CD8-positive, alpha-beta memory T cell (primary cell): ENCODE measurements at regions of chr2 and their contacts with region 1.

Region 1: DNA sequence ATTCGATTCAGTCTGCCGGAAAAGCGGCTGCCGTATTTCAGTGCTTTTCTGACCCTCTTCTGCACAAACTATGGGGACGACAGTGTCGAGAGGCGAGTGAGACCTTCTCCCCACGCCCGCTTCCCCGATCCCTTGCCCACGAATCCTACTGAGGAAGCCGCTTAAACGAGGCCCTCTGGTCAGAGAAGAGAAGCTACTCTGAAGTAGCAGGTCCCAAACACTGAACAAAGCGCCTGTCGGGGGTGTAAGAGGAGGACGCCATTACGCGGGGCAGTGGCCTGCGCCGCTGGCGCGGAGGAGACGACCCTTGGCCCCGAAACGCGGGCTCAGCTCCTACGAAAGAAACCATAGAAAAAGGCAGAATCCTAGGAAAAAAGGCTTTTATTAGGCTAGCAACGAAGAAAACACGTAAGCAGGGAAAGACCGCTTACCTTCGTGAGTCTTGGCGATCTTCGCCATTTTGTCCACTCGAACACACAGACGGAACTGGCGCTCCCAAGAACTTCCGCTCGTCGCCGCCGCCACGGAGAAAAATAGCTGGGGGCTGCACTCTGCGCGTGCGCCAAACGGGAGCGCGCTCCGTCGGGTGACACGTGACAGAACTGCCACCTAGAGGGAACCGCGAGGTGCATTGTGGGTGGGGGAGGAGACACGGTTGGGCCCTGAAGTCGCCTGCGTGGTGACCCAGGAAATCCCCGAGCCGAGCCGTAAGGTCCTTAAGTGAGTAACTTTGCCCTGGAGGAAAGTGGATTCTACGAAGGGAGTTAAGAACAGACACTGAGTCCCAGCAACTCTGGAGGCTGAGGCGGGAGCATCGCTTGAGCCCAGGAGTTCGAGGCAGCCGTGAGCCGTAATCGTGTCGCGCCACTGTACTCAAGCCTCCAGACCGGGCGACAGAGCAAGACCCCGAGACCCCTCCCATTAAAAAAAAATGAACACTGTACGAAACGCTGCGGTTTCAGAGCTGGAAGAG is at the start of gene SF3B1:
- DNase-seq: peak; percentile 99 to 100 (median 99)
- H3K4me3 ChIP-seq: peak within 1 kb of the TSS; percentile 95
- H3K4me3 Mint-ChIP-seq: peak within 1 kb of the TSS; percentile 95 to 100 (median 100)
- H3K27ac ChIP-seq: peak within 1 kb of the TSS; percentile 99
- H3K27ac Mint-ChIP-seq: peak within 1 kb of the TSS; percentile 98 to 100 (median 100)
- H3K4me1 ChIP-seq: peaks cover 46% of the 10 kb centered on the region
- H3K4me1 Mint-ChIP-seq: peaks cover 55 to 60% (median 58%) of the 10 kb centered on the region in 3 donors
- H3K27me3 ChIP-seq: no peaks in the 10 kb centered on the region
- H3K27me3 Mint-ChIP-seq: no peaks in the 10 kb centered on the region
- total RNA-seq, gene SF3B1: 281 to 287 TPM

Region 2: DNA sequence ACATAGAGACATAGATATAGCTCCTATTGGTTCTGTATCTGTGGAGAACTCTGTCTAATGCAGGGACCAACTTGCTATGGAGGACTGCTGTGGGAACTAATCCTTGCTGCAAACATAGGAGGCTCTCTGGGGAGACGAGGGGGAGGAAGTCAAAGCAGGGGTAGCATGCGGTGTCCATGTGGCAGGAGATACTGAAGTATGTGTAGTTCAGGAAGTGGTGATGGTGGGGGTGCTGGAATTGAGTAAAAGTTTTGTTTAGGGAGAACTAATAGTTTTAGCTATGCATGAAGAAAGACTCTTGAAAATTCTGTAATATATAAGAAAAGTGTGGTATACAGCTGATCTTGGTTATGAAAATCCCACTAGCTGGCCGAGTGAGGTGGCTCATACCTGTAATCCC is 186.2 kb before region 1 on chr2:
- CTCF ChIA-PET with region 1: no interaction called
- POLR2A ChIA-PET with region 1: no interaction called
- DNase-seq: peak in 2 of 5 donors; percentile 52 to 60
- H3K4me3 ChIP-seq: no peak overlapping the region
- H3K4me3 Mint-ChIP-seq: peak overlapping the region; percentile 19 to 80 (median 71)
- H3K27ac ChIP-seq: no peak overlapping the region
- H3K27ac Mint-ChIP-seq: peak overlapping the region; percentile 77 to 95 (median 87)
- H3K4me1 ChIP-seq: peaks cover 81% of the 10 kb centered on the region
- H3K4me1 Mint-ChIP-seq: peaks cover 73 to 95% (median 94%) of the 10 kb centered on the region in 3 donors
- H3K27me3 ChIP-seq: no peaks in the 10 kb centered on the region
- H3K27me3 Mint-ChIP-seq: peaks cover 0 to 2% of the 10 kb centered on the region in 2 donors

Region 3: DNA sequence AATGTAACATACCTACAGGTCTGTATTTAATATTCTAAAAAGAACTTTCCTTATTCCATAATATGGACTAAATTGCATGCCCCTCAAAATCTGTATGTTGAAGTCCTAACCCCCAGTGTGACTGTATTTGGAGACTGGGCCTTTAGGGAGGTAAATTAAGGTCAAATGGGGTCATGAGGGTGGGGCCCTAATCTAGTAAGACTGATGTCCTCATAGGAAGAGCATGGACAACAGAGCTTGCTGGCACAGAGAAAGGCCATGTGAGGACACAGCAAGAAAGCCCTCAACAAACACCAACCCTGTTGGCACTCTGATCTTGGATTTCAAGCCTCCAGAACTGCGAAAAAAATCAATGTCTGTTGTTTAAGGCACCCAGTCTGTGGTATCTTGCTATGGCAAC is 18.6 kb before region 1 on chr2:
- CTCF ChIA-PET with region 1: no interaction called
- POLR2A ChIA-PET with region 1: no interaction called
- DNase-seq: no peak
- H3K4me3 ChIP-seq: no peak overlapping the region
- H3K4me3 Mint-ChIP-seq: no peak overlapping the region
- H3K27ac ChIP-seq: no peak overlapping the region
- H3K27ac Mint-ChIP-seq: peak overlapping the region in 2 of 8 donors; percentile 33 to 47
- H3K4me1 ChIP-seq: peaks cover 8% of the 10 kb centered on the region
- H3K4me1 Mint-ChIP-seq: peaks cover 17 to 35% (median 25%) of the 10 kb centered on the region in 3 donors
- H3K27me3 ChIP-seq: no peaks in the 10 kb centered on the region
- H3K27me3 Mint-ChIP-seq: no peaks in the 10 kb centered on the region

Region 4: DNA sequence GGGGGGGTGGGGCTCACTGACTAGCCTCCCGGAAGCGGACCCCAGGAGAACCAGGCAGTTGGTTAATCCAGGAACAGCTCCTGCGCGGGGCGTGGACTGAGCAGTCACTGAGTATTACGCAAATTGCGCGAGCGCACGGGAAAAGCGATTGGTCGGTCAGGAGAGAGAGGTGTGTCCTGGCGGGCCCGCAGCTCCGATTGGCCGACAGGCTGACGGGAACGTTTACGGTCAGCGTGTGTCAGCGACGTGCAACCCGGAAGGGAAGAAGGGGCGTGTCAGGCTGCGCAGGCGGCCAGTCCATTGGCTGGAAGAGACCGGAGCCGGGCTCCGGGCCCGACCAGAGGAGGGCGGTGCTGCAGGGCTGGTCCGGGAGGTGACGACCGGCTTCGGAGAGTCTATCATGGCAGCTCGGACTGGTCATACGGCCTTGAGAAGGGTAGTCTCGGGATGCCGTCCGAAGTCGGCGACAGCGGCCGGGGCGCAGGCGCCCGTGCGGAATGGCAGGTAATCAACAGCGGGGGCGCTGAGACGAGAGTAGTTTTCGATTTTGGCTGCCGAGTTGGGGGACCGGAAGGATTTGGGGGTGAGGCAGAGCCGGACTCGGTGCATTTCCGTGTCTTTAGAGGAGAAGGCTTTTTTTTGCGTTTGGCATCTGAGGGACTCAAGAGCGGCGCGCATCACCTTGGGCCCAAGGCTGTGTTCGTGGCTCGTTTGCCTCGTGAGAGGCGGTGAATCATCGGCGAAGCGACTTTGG is 18.5 kb after region 1 on chr2 and contains the start of gene COQ10B:
- CTCF ChIA-PET with region 1: interaction called, 30 read pairs
- POLR2A ChIA-PET with region 1: interaction called, 97 read pairs
- DNase-seq: peak; percentile 97 to 100 (median 99)
- H3K4me3 ChIP-seq: peak within 1 kb of the TSS; percentile 83
- H3K4me3 Mint-ChIP-seq: peak within 1 kb of the TSS; percentile 94 to 100 (median 99)
- H3K27ac ChIP-seq: peak within 1 kb of the TSS; percentile 99
- H3K27ac Mint-ChIP-seq: peak within 1 kb of the TSS; percentile 97 to 100 (median 100)
- H3K4me1 ChIP-seq: peaks cover 29% of the 10 kb centered on the region
- H3K4me1 Mint-ChIP-seq: peaks cover 40 to 54% (median 51%) of the 10 kb centered on the region in 3 donors
- H3K27me3 ChIP-seq: no peaks in the 10 kb centered on the region
- H3K27me3 Mint-ChIP-seq: peaks cover 0 to 5% of the 10 kb centered on the region in 2 donors
- total RNA-seq, gene COQ10B: 23.4 to 23.7 TPM

Region 5: DNA sequence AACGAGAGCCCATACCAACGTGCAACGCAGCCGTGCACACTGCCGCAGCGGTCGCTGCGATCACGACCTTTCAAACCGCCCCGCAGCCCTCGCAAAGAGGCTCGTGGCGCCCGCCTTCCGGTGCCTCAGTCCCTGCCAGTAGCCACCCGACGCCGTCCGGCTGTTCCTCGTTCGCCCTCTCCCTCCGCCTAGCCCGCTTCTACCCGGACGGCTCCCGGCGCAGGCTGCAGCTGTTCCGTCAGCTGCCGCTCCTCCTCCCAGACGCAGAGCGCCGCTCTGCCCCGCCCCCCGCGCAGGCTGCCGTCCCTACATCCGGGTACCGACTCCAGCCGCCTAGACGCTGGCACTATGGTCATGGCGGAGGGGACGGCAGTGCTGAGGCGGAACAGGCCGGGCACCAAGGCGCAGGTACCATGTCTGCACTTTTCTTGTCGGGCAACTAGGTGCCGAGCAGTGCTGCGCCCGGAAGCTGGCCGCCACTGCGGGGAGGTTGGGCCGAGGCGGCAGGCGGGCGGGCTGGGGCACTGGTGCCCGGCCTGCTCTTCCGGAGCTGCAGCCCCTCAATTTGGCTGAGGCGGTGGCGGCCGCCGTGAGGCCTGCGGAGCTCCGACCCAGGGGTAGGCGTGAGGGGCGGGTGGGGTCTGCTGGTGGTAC is 81.0 kb after region 1 on chr2 and contains the start of gene MOB4:
- CTCF ChIA-PET with region 1: no interaction called
- POLR2A ChIA-PET with region 1: interaction called, 11 read pairs
- DNase-seq: peak; percentile 92 to 96 (median 93)
- H3K4me3 ChIP-seq: peak within 1 kb of the TSS; percentile 91
- H3K4me3 Mint-ChIP-seq: peak within 1 kb of the TSS; percentile 88 to 99 (median 97)
- H3K27ac ChIP-seq: peak within 1 kb of the TSS; percentile 94
- H3K27ac Mint-ChIP-seq: peak within 1 kb of the TSS; percentile 90 to 97 (median 96)
- H3K4me1 ChIP-seq: peaks cover 25% of the 10 kb centered on the region
- H3K4me1 Mint-ChIP-seq: peaks cover 36 to 53% (median 44%) of the 10 kb centered on the region in 3 donors
- H3K27me3 ChIP-seq: no peaks in the 10 kb centered on the region
- H3K27me3 Mint-ChIP-seq: no peaks in the 10 kb centered on the region
- total RNA-seq, gene MOB4: 21.9 to 26.2 TPM

Region 6: GRCh38 chr2:197539734-197540133 is 104.9 kb after region 1 on chr2:
- CTCF ChIA-PET with region 1: no interaction called
- POLR2A ChIA-PET with region 1: no interaction called
- DNase-seq: no peak
- H3K4me3 ChIP-seq: no peak overlapping the region
- H3K4me3 Mint-ChIP-seq: no peak overlapping the region
- H3K27ac ChIP-seq: no peak overlapping the region
- H3K27ac Mint-ChIP-seq: peak overlapping the region in 5 of 8 donors; percentile 1 to 37 (median 10)
- H3K4me1 ChIP-seq: peaks cover 5% of the 10 kb centered on the region
- H3K4me1 Mint-ChIP-seq: peaks cover 28 to 55% (median 52%) of the 10 kb centered on the region in 3 donors
- H3K27me3 ChIP-seq: no peaks in the 10 kb centered on the region
- H3K27me3 Mint-ChIP-seq: no peaks in the 10 kb centered on the region

Region 7: DNA sequence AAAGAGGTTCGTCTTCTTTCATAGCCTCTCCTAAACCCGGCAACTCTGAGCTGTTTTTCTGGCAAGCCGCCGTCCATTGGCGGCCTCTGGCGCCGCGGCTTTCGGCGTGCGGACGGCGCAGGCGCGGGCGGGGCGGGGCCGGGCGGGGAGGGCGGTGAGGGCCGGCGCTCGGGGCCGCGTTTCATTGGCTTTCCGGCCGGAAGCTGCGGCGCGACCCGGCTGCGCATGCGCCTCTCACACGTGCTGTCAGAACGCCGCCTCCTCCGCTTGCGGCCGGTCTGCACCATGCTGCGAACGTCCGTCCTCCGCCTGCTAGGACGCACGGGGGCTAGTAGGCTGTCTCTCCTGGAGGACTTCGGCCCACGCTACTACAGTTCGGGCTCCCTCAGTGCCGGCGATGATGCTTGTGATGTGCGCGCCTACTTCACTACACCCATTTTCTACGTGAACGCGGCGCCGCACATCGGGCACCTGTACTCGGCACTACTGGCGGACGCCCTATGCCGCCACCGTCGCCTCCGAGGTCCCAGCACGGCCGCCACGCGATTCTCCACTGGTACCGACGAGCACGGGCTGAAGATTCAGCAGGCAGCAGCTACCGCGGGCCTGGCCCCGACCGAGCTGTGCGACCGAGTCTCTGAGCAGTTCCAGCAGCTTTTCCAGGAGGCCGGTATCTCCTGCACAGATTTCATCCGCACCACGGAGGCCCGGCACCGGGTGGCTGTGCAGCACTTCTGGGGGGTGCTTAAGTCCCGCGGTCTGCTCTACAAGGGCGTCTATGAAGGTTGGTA is 270.5 kb after region 1 on chr2 and contains the start of gene MARS2:
- CTCF ChIA-PET with region 1: no interaction called
- POLR2A ChIA-PET with region 1: interaction called, 10 read pairs
- DNase-seq: peak; percentile 90 to 95 (median 91)
- H3K4me3 ChIP-seq: peak within 1 kb of the TSS; percentile 88
- H3K4me3 Mint-ChIP-seq: peak within 1 kb of the TSS; percentile 86 to 95 (median 92)
- H3K27ac ChIP-seq: peak within 1 kb of the TSS; percentile 60
- H3K27ac Mint-ChIP-seq: peak within 1 kb of the TSS; percentile 86 to 99 (median 94)
- H3K4me1 ChIP-seq: peaks cover 40% of the 10 kb centered on the region
- H3K4me1 Mint-ChIP-seq: peaks cover 39 to 57% (median 56%) of the 10 kb centered on the region in 3 donors
- H3K27me3 ChIP-seq: no peaks in the 10 kb centered on the region
- H3K27me3 Mint-ChIP-seq: no peaks in the 10 kb centered on the region
- total RNA-seq, gene MARS2: 27.1 to 27.9 TPM